CD4-positive, alpha-beta T cell (primary cell): ENCODE measurements at regions of chrX and their contacts with region 1.

Region 1: DNA sequence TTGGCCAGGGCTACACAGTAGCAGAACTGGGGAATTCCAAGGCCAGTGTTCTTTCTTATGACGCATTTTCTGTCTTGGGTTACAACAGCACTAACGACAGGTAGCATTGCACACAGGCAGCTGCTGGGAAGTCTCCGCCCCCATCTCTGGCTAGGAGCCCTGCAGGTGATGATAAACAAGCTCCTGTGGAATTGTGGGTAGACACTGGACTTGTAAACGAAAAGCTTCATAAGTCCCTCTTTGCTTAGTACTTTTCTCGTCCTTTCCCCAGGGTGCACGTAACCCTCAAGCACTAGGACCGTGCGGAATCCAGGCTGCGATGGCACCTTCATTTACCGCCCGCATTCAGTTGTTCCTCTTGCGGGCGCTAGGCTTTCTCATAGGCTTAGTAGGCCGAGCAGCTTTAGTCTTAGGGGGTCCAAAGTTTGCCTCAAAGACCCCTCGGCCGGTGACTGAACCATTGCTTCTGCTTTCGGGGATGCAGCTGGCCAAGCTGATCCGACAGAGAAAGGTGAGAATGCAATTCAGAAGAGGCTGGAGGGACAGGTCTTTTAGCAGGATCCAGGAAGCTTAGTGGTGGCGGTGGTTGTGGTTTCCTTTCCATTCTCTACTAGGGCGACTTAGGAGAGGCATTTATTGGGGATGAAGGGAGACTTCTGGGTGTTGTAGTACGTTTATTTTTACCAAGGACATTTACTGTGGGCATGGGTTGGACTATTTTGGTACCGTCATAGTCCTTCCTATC is at the start of gene FAAH2:
- DNase-seq: peak; percentile 29 to 92 (median 62)
- ATAC-seq: peak; percentile 88
- H3K4me3 ChIP-seq: peak within 1 kb of the TSS; percentile 67
- H3K4me3 Mint-ChIP-seq: peak within 1 kb of the TSS; percentile 94
- H3K27ac ChIP-seq: peak within 1 kb of the TSS; percentile 51 to 73
- H3K27ac Mint-ChIP-seq: peak within 1 kb of the TSS; percentile 93
- H3K4me1 ChIP-seq: peaks cover 6% of the 10 kb centered on the region
- H3K4me1 Mint-ChIP-seq: peaks cover 57% of the 10 kb centered on the region
- H3K27me3 ChIP-seq: no peaks in the 10 kb centered on the region
- H3K27me3 Mint-ChIP-seq: no peaks in the 10 kb centered on the region
- CTCF ChIP-seq: no peak
- total RNA-seq, gene FAAH2: 5.1 to 7.4 TPM

Region 2: DNA sequence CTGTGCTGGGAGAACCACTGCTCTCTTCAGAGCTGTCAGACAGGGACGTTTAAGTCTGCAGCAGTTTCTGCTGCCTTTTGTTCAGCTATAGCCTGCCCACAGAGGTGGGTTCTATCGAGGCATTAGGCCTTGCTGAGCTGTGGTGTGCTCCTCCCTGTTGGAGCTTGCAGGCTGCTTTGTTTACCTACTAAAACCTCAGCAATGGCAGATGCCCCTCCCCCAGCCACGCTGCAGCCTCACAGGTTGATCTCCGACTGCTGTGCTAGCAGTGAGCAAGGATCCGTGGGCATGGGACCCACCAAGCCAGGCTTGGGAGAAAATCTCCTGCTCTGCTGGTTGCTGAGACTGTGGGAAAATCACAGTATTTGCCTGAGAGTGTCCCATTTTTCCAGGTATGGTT is 857.1 kb before region 1 on chrX:
- CTCF ChIA-PET with region 1: no interaction called
- POLR2A ChIA-PET with region 1: no interaction called
- intact Hi-C with region 1: no loop called
- DNase-seq: peak in 1 of 14 experiments; percentile 32
- ATAC-seq: no peak
- H3K4me3 ChIP-seq: no peak overlapping the region
- H3K4me3 Mint-ChIP-seq: no peak overlapping the region
- H3K27ac ChIP-seq: no peak overlapping the region
- H3K27ac Mint-ChIP-seq: no peak overlapping the region
- H3K4me1 ChIP-seq: peaks cover 4% of the 10 kb centered on the region
- H3K4me1 Mint-ChIP-seq: peaks cover 3% of the 10 kb centered on the region
- H3K27me3 ChIP-seq: no peaks in the 10 kb centered on the region
- H3K27me3 Mint-ChIP-seq: no peaks in the 10 kb centered on the region
- CTCF ChIP-seq: no peak

Region 3: GRCh38 chrX:57121162-57121741 is 165.4 kb before region 1 on chrX and contains the start of gene SPIN2B:
- CTCF ChIA-PET with region 1: no interaction called
- POLR2A ChIA-PET with region 1: interaction called, 5 read pairs
- intact Hi-C with region 1: loop called in 1 of 2 experiments (anchors 2 kb)
- DNase-seq: peak; percentile 35 to 85 (median 66)
- ATAC-seq: peak; percentile 99
- H3K4me3 ChIP-seq: peak within 1 kb of the TSS; percentile 73
- H3K4me3 Mint-ChIP-seq: peak within 1 kb of the TSS; percentile 99
- H3K27ac ChIP-seq: peak within 1 kb of the TSS; percentile 2 to 40
- H3K27ac Mint-ChIP-seq: peak within 1 kb of the TSS; percentile 92
- H3K4me1 ChIP-seq: no peaks in the 10 kb centered on the region
- H3K4me1 Mint-ChIP-seq: peaks cover 14% of the 10 kb centered on the region
- H3K27me3 ChIP-seq: no peaks in the 10 kb centered on the region
- H3K27me3 Mint-ChIP-seq: no peaks in the 10 kb centered on the region
- CTCF ChIP-seq: no peak
- total RNA-seq, gene SPIN2B: 7.9 to 8.7 TPM

Region 4: GRCh38 chrX:57406149-57406548 is 119.5 kb after region 1 on chrX:
- CTCF ChIA-PET with region 1: no interaction called
- POLR2A ChIA-PET with region 1: no interaction called
- intact Hi-C with region 1: no loop called
- DNase-seq: no peak
- ATAC-seq: no peak
- H3K4me3 ChIP-seq: no peak overlapping the region
- H3K4me3 Mint-ChIP-seq: no peak overlapping the region
- H3K27ac ChIP-seq: no peak overlapping the region
- H3K27ac Mint-ChIP-seq: no peak overlapping the region
- H3K4me1 ChIP-seq: no peaks in the 10 kb centered on the region
- H3K4me1 Mint-ChIP-seq: no peaks in the 10 kb centered on the region
- H3K27me3 ChIP-seq: no peaks in the 10 kb centered on the region
- H3K27me3 Mint-ChIP-seq: no peaks in the 10 kb centered on the region
- CTCF ChIP-seq: no peak

Region 5: DNA sequence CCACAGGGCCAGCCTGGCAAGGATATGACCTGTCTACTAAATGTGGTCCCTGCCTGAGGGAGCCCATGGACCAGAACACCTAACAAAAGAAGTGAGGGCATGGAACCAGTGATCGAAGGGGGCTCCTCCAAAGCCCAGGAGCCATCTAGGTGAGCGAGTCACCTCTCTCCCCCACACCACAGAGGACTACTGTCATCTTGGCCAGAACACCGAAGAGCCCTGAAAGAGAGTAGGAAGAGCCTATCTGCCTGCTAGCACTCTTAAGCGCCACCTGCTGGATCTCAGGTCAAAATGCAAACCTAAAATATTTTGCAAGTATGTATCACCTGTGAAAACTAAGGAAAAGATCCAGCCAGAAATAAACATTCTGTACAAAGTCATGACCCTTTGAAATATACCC is 167.2 kb after region 1 on chrX:
- CTCF ChIA-PET with region 1: interaction called, 3 read pairs
- POLR2A ChIA-PET with region 1: no interaction called
- intact Hi-C with region 1: loop called (anchors 1 to 5 kb)
- DNase-seq: peak in 6 of 14 experiments; percentile 1 to 57 (median 33)
- ATAC-seq: peak; percentile 29
- H3K4me3 ChIP-seq: no peak overlapping the region
- H3K4me3 Mint-ChIP-seq: no peak overlapping the region
- H3K27ac ChIP-seq: no peak overlapping the region
- H3K27ac Mint-ChIP-seq: no peak overlapping the region
- H3K4me1 ChIP-seq: peaks cover 2% of the 10 kb centered on the region
- H3K4me1 Mint-ChIP-seq: no peaks in the 10 kb centered on the region
- H3K27me3 ChIP-seq: no peaks in the 10 kb centered on the region
- H3K27me3 Mint-ChIP-seq: no peaks in the 10 kb centered on the region
- CTCF ChIP-seq: no peak

Region 6: GRCh38 chrX:57595381-57595811 is 308.7 kb after region 1 on chrX:
- CTCF ChIA-PET with region 1: no interaction called
- POLR2A ChIA-PET with region 1: no interaction called
- intact Hi-C with region 1: loop called in 1 of 2 experiments (anchors 10 kb)
- DNase-seq: peak in 3 of 14 experiments; percentile 26 to 46 (median 34)
- ATAC-seq: no peak
- H3K4me3 ChIP-seq: no peak overlapping the region
- H3K4me3 Mint-ChIP-seq: peak overlapping the region; percentile 81
- H3K27ac ChIP-seq: no peak overlapping the region
- H3K27ac Mint-ChIP-seq: peak overlapping the region; percentile 66
- H3K4me1 ChIP-seq: peaks cover 18% of the 10 kb centered on the region
- H3K4me1 Mint-ChIP-seq: peaks cover 49% of the 10 kb centered on the region
- H3K27me3 ChIP-seq: no peaks in the 10 kb centered on the region
- H3K27me3 Mint-ChIP-seq: no peaks in the 10 kb centered on the region
- CTCF ChIP-seq: no peak

Region 7: DNA sequence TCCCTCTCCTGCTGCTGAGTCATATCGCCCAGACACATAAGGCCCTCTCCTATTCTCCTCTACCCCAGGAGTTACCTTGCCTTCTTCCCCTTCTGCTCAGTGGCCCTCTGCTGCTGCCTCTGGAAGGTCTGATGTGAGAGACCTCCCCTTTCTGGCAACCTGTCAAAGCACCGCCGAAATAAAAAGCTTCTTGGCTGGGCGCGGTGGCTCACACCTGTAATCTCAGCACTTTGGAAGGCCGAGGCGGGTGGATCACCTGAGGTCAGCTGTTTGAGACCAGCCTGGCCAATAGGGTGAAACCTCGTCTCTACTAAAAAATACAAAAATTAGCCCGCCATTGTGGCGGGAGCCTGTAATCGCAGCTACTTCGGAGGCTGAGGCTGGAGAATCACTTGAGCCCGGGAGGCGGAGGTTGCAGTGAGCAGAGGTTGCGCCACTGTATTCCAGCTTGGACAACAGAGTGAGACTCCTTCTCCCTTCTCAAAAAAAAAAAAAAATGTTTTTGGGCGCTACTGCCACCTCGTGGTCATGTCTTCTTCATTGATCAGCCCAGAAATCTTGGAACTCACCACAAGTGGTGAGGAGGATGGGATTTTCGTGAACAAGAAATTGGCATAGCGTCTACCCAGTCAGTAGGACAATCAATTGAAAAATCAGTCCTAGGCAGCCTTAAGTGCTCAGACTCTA is 632.2 kb after region 1 on chrX:
- CTCF ChIA-PET with region 1: no interaction called
- POLR2A ChIA-PET with region 1: no interaction called
- intact Hi-C with region 1: loop called (anchors 10 kb)
- DNase-seq: peak in 6 of 14 experiments; percentile 1 to 60 (median 43)
- ATAC-seq: no peak
- H3K4me3 ChIP-seq: no peak overlapping the region
- H3K4me3 Mint-ChIP-seq: no peak overlapping the region
- H3K27ac ChIP-seq: no peak overlapping the region
- H3K27ac Mint-ChIP-seq: no peak overlapping the region
- H3K4me1 ChIP-seq: peaks cover 3% of the 10 kb centered on the region
- H3K4me1 Mint-ChIP-seq: no peaks in the 10 kb centered on the region
- H3K27me3 ChIP-seq: no peaks in the 10 kb centered on the region
- H3K27me3 Mint-ChIP-seq: no peaks in the 10 kb centered on the region
- CTCF ChIP-seq: peak; percentile 54

Region 8: DNA sequence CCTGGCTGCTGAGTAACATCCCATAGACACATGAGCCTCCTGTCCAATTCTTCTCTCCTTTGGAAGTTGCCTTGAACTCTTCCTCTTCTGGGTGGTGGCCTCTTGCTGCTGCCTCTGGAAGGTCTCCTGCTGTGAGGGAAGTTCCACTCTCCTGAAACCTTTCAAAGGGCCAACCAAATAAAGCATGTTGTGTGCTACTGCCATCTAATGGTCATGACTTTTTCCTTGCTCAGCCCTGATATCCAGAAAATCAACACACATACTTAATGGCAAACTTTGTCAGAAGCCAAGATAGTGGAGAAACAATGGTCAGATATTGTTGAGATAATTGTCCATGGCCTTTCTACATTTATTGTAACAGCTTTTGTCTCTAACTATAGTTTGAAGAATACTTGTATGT is 642.7 kb after region 1 on chrX:
- CTCF ChIA-PET with region 1: no interaction called
- POLR2A ChIA-PET with region 1: no interaction called
- intact Hi-C with region 1: loop called in 1 of 2 experiments (anchors 10 kb)
- DNase-seq: peak in 3 of 14 experiments; percentile 19 to 44 (median 42)
- ATAC-seq: no peak
- H3K4me3 ChIP-seq: no peak overlapping the region
- H3K4me3 Mint-ChIP-seq: no peak overlapping the region
- H3K27ac ChIP-seq: no peak overlapping the region
- H3K27ac Mint-ChIP-seq: no peak overlapping the region
- H3K4me1 ChIP-seq: no peaks in the 10 kb centered on the region
- H3K4me1 Mint-ChIP-seq: no peaks in the 10 kb centered on the region
- H3K27me3 ChIP-seq: no peaks in the 10 kb centered on the region
- H3K27me3 Mint-ChIP-seq: no peaks in the 10 kb centered on the region
- CTCF ChIP-seq: peak; percentile 20